Activated CD4-positive, alpha-beta memory T cell treated with anti-CD3 and anti-CD28 coated beads, Interleukin-2, amount 10 ng/mL, durations not matched to agents 7 days and 5 days (primary cell): ENCODE measurements at regions of chr12 and their contacts with region 1.

Region 1: DNA sequence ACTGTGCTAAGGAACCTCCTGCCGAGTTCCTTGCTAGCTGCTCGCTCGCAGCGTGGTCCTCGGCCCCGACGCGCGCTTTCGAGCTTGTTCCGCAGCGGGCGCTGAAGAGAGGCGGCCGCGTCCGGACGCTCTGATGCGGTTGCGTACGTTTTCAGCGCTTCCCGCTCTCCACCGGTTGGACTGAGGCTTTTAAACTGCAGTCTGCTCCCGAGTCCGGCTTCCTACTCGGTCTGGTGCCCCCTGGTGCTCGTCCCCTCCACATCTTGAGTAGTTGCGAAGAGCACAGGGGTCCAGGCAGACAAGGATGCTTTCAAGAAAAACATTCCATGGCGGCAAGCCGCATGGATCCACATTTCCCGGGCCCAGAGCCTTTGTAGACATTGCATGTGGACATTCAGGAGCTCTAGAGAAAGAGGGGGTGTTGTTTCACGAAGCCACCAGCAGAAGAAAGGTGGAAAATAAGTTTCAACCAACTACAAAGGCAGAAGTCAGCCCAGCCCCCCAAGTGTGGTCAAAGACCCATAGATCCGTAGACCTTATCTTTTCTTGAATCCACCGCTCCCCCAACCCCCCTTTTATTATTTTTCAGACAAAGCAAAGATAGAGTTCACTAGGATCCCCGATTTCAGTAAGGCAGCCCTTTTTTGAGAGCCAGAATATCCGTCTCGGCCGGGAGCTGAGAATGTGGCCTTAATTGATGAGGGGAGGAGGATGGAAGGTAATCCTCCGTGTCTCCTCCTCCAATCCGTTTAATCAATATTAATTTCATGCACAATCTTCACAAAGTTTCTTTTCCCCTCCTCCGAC is 984 bp upstream of the WNK1 start:
- DNase-seq: peak; percentile 93
- H3K4me3 Mint-ChIP-seq: no peak overlapping the region
- H3K27ac Mint-ChIP-seq: no peak overlapping the region
- H3K4me1 Mint-ChIP-seq: peaks cover 26% of the 10 kb centered on the region
- H3K27me3 Mint-ChIP-seq: no peaks in the 10 kb centered on the region

Region 2: DNA sequence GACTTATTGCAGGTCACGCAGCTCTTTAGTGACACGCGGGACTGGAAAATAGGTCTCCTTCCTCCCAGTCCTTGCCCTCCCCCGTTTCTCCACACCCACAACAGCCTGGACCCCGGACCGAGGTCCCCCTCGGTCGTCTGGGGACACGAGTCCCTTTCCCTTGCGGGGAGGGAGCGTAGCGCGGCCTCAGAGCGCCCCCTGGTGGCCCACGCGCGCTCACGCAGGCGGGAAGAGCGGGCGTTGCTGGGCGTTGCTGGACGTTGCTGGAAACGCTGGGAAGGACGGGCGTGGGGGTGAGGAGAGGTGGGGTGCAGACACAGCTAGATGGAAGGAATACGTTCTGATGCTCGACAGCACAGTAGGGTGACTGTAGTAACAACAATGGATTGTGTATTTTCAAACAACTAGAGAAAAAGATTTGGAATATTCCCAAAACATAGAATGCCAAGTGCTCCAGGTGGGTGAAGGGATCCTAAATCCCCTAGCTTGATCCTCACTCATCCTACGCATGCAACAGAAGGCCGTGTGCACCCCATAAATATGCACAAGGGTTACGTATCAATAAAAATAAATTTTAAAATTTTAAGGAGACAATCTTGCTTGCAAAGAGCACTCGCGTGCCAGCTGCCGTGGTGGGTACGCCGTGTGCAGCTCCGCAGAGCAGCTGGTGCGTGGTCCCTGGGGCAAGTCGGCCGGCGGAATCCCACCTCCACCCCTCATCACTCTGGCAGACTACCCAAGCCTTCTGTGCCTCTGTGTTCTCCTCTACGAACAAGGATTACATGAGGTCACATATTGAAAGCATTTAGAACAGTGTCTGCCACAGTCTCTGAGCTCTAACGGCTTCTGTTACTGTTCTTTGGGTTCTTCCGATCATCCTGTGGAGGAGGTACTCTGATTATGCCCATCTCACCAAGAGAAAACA is 204.2 kb before region 1 on chr12:
- CTCF ChIA-PET with region 1: no interaction called
- POLR2A ChIA-PET with region 1: no interaction called
- DNase-seq: peak; percentile 72
- H3K4me3 Mint-ChIP-seq: no peak overlapping the region
- H3K27ac Mint-ChIP-seq: no peak overlapping the region
- H3K4me1 Mint-ChIP-seq: peaks cover 19% of the 10 kb centered on the region
- H3K27me3 Mint-ChIP-seq: peaks cover 15% of the 10 kb centered on the region

Region 3: GRCh38 chr12:607526-608001 is 143.8 kb before region 1 on chr12:
- CTCF ChIA-PET with region 1: interaction called, 42 read pairs
- POLR2A ChIA-PET with region 1: interaction called, 7 read pairs
- DNase-seq: peak; percentile 38
- H3K4me3 Mint-ChIP-seq: no peak overlapping the region
- H3K27ac Mint-ChIP-seq: peak overlapping the region; percentile 80
- H3K4me1 Mint-ChIP-seq: peaks cover 51% of the 10 kb centered on the region
- H3K27me3 Mint-ChIP-seq: no peaks in the 10 kb centered on the region

Region 4: DNA sequence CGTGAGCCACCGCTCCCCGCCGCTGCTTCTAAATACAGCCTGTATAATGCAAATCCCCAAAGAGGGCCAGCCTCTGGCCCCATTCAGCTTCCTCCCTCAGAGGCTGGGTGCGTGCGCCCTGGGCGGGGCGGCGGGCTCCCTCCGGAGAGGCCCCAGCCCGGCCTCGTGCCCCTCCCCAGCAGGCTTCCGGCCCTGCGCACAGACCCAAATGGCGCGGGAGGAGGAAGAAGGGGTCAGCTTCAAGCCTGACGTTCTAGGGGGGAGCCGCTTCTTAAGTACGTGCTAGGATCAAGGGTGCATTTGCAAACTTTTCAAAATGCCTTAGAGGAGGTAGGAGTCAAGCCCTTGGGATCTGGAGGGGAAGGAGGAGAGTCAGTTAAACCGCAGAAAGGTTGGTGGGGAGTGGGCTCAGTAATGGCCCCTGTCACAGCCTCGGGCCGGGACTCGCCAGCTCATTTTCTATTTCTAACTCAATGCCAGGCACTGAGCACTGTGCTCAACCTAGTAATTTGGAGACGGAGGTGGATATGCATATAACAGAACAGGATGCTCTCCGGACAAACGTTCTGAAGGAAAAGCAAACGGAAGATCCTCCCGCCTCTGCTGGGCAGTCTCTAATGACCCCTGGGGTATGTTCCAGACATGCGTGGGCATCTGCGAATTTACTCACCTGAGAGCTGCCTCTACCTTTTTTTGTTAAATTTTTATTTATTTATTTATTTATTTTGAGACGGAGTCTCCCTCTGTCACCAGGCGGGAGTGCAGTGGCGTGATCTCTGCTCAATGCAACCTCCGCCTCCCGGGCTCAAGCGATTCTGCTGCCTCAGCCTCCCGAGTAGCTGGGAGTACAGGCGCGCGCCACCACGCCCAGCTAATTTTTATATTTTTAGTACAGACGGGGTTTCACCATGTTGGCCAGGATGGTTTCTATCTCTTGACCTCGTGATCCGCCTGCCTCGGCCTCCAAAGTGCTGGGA is 120.5 kb before region 1 on chr12:
- CTCF ChIA-PET with region 1: interaction called, 26 read pairs
- POLR2A ChIA-PET with region 1: interaction called, 24 read pairs
- DNase-seq: no peak
- H3K4me3 Mint-ChIP-seq: no peak overlapping the region
- H3K27ac Mint-ChIP-seq: no peak overlapping the region
- H3K4me1 Mint-ChIP-seq: peaks cover 17% of the 10 kb centered on the region
- H3K27me3 Mint-ChIP-seq: no peaks in the 10 kb centered on the region

Region 5: GRCh38 chr12:662566-663292 is 88.7 kb before region 1 on chr12:
- CTCF ChIA-PET with region 1: interaction called, 26 read pairs
- POLR2A ChIA-PET with region 1: interaction called, 56 read pairs
- DNase-seq: no peak
- H3K4me3 Mint-ChIP-seq: peak overlapping the region; percentile 69
- H3K27ac Mint-ChIP-seq: peak overlapping the region; percentile 71
- H3K4me1 Mint-ChIP-seq: peaks cover 46% of the 10 kb centered on the region
- H3K27me3 Mint-ChIP-seq: no peaks in the 10 kb centered on the region

Region 6: DNA sequence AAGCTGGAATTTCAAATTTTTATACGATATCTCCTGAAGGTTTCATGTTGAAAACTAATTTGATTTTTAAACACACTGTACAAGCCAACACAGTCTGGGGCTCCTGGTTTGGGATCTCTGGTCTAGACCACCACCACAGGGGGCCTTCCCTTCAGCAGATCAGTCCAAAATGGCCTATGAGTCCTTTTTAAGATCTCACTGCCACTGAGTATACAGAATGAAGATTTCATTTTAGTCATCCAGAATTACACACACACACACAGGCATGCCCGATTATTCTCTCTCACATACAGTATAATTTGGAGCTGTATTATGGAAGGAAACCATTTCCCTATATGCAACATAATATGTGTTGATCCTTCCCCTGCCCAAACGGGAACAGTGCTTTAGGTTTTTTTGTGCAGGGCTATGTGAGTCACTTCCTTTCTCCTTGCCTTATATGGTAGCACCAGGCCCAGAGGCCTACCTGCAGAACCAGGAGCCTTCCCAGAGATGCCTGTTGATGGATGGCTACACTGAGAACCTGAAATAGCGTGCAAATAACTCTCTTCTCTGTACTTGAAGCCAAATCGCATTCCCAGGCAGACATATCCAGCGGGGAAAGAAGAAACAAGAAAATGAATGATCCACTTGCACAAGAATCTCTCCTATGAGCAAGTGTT is 27.1 kb before region 1 on chr12:
- CTCF ChIA-PET with region 1: interaction called, 47 read pairs
- POLR2A ChIA-PET with region 1: interaction called, 81 read pairs
- DNase-seq: peak; percentile 30
- H3K4me3 Mint-ChIP-seq: peak overlapping the region; percentile 33
- H3K27ac Mint-ChIP-seq: peak overlapping the region; percentile 58
- H3K4me1 Mint-ChIP-seq: peaks cover 62% of the 10 kb centered on the region
- H3K27me3 Mint-ChIP-seq: no peaks in the 10 kb centered on the region

Region 7: GRCh38 chr12:810671-811415 is 59.4 kb after region 1 on chr12:
- CTCF ChIA-PET with region 1: interaction called, 25 read pairs
- POLR2A ChIA-PET with region 1: interaction called, 24 read pairs
- DNase-seq: peak; percentile 55
- H3K4me3 Mint-ChIP-seq: peak overlapping the region; percentile 25
- H3K27ac Mint-ChIP-seq: peak overlapping the region; percentile 49
- H3K4me1 Mint-ChIP-seq: peaks cover 66% of the 10 kb centered on the region
- H3K27me3 Mint-ChIP-seq: no peaks in the 10 kb centered on the region